ENCODE measurements at regions of chr1 and their contacts with region 1.

Region 1: GRCh38 chr1:178238722-178239510 is 145.0 kb downstream of the RASAL2 start:
- DNase-seq: peak; percentile 99
- H3K4me3 ChIP-seq: peak overlapping the region in 1 of 3 experiments; percentile 17
- H3K27ac ChIP-seq: peak overlapping the region; percentile 100
- H3K4me1 ChIP-seq: peaks cover 55% of the 10 kb centered on the region
- H3K27me3 ChIP-seq: no peaks in the 10 kb centered on the region
- CTCF ChIP-seq: no peak

Region 2: GRCh38 chr1:178126790-178127189 is 112.1 kb before region 1 on chr1:
- CTCF ChIA-PET with region 1: no interaction called
- dilution Hi-C with region 1: no loop called
- in situ Hi-C with region 1: no loop called
- intact Hi-C with region 1: loop called (anchors 5 kb)
- DNase-seq: peak; percentile 97
- H3K4me3 ChIP-seq: peak overlapping the region in 1 of 3 experiments; percentile 50
- H3K27ac ChIP-seq: peak overlapping the region; percentile 99
- H3K4me1 ChIP-seq: peaks cover 55% of the 10 kb centered on the region
- H3K27me3 ChIP-seq: no peaks in the 10 kb centered on the region
- CTCF ChIP-seq: no peak

Region 3: GRCh38 chr1:178172954-178173353 is 66.0 kb before region 1 on chr1:
- CTCF ChIA-PET with region 1: no interaction called
- dilution Hi-C with region 1: loop called (anchors 5 kb)
- in situ Hi-C with region 1: no loop called
- intact Hi-C with region 1: no loop called
- DNase-seq: no peak
- H3K4me3 ChIP-seq: no peak overlapping the region
- H3K27ac ChIP-seq: peak overlapping the region; percentile 99
- H3K4me1 ChIP-seq: peaks cover 33% of the 10 kb centered on the region
- H3K27me3 ChIP-seq: no peaks in the 10 kb centered on the region
- CTCF ChIP-seq: no peak

Region 4: DNA sequence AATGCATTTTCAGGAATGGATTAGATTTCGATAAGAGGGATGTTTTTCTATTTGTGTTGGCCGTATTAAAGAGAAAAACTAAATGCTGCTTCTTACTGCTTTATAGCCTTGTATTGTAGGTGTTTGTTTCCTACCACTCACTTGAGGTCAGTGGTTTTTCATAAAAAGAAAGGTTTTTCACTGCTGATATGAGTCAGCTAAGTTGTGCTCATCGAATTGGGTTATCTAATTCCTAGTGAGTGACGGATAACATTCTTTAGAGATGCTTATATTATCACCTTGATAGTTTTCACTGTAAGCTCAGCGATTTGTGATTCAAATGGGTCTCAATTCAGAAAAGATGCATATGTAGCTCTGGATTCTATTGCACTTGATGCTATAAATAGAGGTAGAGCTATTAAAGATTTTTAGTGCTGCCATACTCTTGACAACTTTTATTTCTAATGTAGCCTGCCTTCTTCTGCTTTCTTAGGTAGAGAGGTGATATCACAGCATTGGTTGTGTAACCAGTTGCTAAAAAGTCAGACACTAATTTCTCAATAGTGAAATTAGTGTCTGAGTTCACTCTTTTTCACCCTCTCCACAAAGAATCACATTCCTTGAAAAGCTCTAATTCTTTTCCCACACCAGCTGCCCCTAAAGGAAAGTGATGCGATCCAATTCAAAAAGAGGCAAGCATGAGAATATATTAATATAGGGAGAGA is 34.9 kb after region 1 on chr1:
- CTCF ChIA-PET with region 1: interaction called, 3 read pairs
- dilution Hi-C with region 1: no loop called
- in situ Hi-C with region 1: no loop called
- intact Hi-C with region 1: loop called (anchors 5 kb)
- DNase-seq: peak; percentile 57
- H3K4me3 ChIP-seq: no peak overlapping the region
- H3K27ac ChIP-seq: peak overlapping the region; percentile 48
- H3K4me1 ChIP-seq: peaks cover 64% of the 10 kb centered on the region
- H3K27me3 ChIP-seq: no peaks in the 10 kb centered on the region
- CTCF ChIP-seq: no peak

Region 5: GRCh38 chr1:178282949-178283367 is 44.0 kb after region 1 on chr1:
- CTCF ChIA-PET with region 1: no interaction called
- dilution Hi-C with region 1: no loop called
- in situ Hi-C with region 1: no loop called
- intact Hi-C with region 1: loop called (anchors 1 kb)
- DNase-seq: peak; percentile 72
- H3K4me3 ChIP-seq: no peak overlapping the region
- H3K27ac ChIP-seq: peak overlapping the region; percentile 55
- H3K4me1 ChIP-seq: peaks cover 29% of the 10 kb centered on the region
- H3K27me3 ChIP-seq: no peaks in the 10 kb centered on the region
- CTCF ChIP-seq: peak; percentile 48 to 56

Region 6: GRCh38 chr1:178294654-178295053 is 55.7 kb after region 1 on chr1:
- CTCF ChIA-PET with region 1: no interaction called
- dilution Hi-C with region 1: no loop called
- in situ Hi-C with region 1: no loop called
- intact Hi-C with region 1: no loop called
- DNase-seq: peak; percentile 56
- H3K4me3 ChIP-seq: no peak overlapping the region
- H3K27ac ChIP-seq: peak overlapping the region; percentile 6
- H3K4me1 ChIP-seq: peaks cover 1% of the 10 kb centered on the region
- H3K27me3 ChIP-seq: no peaks in the 10 kb centered on the region
- CTCF ChIP-seq: peak; percentile 12 to 18